Calu3 (cell line): ENCODE measurements at regions of chr5 and their contacts with region 1.

Region 1: GRCh38 chr5:149452007-149452664 is 73.0 kb upstream of the IL17B start:
- DNase-seq: peak; percentile 85
- H3K4me3 Mint-ChIP-seq: peak overlapping the region; percentile 14
- H3K27ac Mint-ChIP-seq: peak overlapping the region; percentile 75
- H3K4me1 Mint-ChIP-seq: peaks cover 63% of the 10 kb centered on the region
- H3K27me3 Mint-ChIP-seq: no peaks in the 10 kb centered on the region
- CTCF ChIP-seq: no peak

Region 2: GRCh38 chr5:149439899-149440561 is 12.1 kb before region 1 on chr5:
- CTCF ChIA-PET with region 1: interaction called, 14 read pairs
- intact Hi-C with region 1: no loop called
- DNase-seq: peak; percentile 93
- H3K4me3 Mint-ChIP-seq: peak overlapping the region; percentile 6
- H3K27ac Mint-ChIP-seq: peak overlapping the region; percentile 81
- H3K4me1 Mint-ChIP-seq: peaks cover 41% of the 10 kb centered on the region
- H3K27me3 Mint-ChIP-seq: no peaks in the 10 kb centered on the region
- CTCF ChIP-seq: peak; percentile 86

Region 3: DNA sequence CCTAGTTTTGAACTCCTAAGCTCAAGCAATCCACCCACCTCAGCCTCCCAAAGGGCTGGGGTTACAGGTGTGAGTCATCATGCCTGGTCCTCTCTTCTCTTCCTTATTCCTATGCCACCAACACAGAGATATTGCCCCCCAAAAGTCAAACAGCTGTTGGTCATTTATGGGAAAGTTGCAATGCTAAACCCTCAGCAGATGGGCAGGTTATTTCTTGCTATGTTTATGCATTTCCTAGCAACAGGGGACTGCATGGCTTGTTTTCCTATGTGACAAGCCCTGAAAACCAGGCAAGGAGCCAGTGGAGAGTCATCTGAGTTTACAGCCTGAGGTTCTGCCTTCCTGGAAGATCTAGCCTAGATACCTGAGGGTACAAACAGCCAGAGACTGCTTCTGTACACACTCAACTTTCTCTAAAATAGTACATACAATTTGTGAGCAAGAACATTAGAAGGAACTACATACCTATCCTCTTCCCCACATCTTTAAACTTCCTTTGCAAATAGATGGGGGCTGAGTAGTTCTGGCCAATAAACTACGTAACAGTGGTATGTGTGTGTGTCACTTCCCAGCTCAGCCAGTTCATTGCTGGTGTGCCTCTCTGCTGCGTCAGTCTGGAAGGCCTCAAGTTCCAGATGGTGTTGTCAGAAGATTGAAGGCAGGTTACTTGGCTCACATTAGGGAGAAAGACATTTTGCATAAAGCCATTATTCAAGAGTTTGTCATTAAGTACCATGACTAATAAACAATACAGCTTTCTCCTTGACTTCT is 33.7 kb after region 1 on chr5:
- CTCF ChIA-PET with region 1: interaction called, 5 read pairs
- intact Hi-C with region 1: loop called (anchors 2 kb)
- DNase-seq: peak; percentile 83
- H3K4me3 Mint-ChIP-seq: no peak overlapping the region
- H3K27ac Mint-ChIP-seq: peak overlapping the region; percentile 86
- H3K4me1 Mint-ChIP-seq: peaks cover 56% of the 10 kb centered on the region
- H3K27me3 Mint-ChIP-seq: no peaks in the 10 kb centered on the region
- CTCF ChIP-seq: no peak